ENCODE measurements at regions of chr9 and their contacts with region 1.

Region 1: GRCh38 chr9:97598461-97599288 is 34.5 kb downstream of the TSTD2 start:
- DNase-seq: peak; percentile 20
- H3K4me3 ChIP-seq: no peak overlapping the region
- H3K27me3 ChIP-seq: no peaks in the 10 kb centered on the region
- CTCF ChIP-seq: peak; percentile 92

Region 2: DNA sequence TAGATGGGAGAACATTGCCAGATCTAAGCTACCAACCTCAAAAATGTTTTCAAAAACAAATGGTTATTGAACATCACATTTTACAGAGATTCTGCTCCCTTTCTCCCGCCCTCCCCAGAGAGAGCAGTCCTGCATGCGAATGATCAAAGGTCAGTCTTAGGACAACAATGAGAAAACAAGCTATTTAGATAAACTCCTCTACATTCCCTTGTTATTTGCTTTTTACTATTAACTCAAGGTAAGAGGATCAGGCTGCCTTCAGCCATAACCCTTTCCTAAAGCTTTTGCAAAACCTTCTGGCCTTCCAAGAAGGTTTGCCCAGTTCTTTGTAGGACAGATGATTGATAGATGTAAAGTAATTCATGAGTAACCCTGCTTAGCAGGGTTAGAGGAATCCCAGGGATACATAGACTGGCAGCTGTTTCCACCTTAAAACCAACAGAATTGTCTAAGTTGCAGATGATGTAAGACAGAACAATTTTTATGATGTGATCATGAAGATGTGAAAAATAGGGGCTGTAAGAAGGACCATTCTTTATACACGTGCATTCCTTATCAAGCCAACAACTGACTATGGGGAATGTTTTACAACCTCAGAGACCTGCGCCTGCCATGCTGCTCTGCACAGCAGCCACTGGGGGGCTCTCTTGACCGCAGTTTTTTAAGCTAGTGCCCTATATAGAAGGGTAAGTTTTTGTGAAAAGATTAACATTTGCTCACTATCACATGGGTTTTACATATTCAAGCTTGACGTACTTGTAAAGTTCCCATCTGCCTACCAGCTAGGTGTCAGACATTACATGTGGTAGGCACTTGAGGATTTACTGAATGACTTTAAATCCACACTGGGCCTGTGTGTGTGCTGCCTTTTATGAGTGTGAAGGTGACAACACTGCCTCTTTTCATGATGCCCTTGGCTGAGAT is 742.0 kb before region 1 on chr9:
- CTCF ChIA-PET with region 1: interaction called, 24 read pairs
- POLR2A ChIA-PET with region 1: no interaction called
- DNase-seq: no peak
- H3K4me3 ChIP-seq: no peak overlapping the region
- H3K27me3 ChIP-seq: no peaks in the 10 kb centered on the region
- CTCF ChIP-seq: peak; percentile 91

Region 3: DNA sequence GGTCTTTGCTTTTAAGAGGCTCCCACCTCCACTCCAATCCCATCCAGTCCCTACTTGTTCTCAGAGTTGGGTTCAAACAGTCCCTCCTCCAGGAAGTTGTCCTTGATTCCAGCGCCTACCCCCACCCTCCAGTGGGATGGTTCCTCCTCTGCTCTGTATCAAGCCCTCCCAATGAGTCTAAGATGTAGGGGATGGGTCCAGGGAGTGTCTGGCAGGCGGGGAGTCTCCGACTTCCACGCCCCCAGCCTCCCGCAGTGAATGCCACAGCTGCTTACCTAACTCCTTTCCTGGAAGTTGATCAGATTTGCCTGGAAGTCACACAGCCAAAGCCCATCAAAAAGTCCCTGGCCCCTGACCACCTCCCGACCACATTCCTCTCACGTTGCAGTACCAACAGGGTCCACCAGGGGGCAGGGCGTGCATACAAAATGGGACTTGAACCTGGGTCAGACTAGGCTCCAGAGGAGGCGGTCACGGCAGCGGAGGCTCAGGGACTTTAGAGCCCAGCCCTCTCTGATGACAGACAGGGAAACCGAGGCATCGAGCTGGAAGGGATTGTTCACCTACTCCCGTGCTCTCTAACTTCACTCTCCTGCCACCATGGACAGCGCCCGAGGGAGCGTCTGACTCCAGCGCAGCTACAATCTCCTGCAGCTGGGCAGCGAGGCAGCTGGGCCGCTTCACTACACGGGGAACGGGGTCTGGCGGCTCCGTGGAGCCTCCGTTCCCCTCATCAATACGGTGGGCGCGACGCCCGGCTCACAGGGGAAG is 211.8 kb before region 1 on chr9:
- CTCF ChIA-PET with region 1: interaction called, 12 read pairs
- POLR2A ChIA-PET with region 1: no interaction called
- DNase-seq: no peak
- H3K4me3 ChIP-seq: no peak overlapping the region
- H3K27me3 ChIP-seq: peaks cover 2% of the 10 kb centered on the region
- CTCF ChIP-seq: peak; percentile 99

Region 4: GRCh38 chr9:97459099-97459725 is 139.5 kb before region 1 on chr9:
- CTCF ChIA-PET with region 1: interaction called, 14 read pairs
- POLR2A ChIA-PET with region 1: no interaction called
- DNase-seq: no peak
- H3K4me3 ChIP-seq: no peak overlapping the region
- H3K27me3 ChIP-seq: no peaks in the 10 kb centered on the region
- CTCF ChIP-seq: no peak

Region 5: DNA sequence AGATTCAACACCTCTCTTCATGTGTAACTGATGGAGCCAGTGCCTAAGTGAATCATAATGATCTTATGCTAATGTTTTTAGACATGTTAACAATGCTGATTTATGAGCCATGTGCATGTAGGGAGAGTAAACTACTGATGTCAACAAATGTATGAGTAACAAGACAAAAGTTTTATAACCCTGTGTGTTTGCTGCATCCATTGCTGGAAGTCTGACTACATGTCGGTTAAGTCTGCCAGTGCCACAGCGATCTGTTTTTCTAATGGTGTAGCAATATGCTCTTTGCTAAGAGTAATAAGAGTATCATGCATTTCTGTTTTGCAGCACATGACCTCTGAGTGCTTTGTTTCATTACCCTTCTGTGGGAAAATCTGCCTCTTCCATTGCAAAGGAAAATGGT is 123.6 kb before region 1 on chr9:
- CTCF ChIA-PET with region 1: interaction called, 292 read pairs
- POLR2A ChIA-PET with region 1: no interaction called
- DNase-seq: peak; percentile 23
- H3K4me3 ChIP-seq: no peak overlapping the region
- H3K27me3 ChIP-seq: no peaks in the 10 kb centered on the region
- CTCF ChIP-seq: no peak

Region 6: DNA sequence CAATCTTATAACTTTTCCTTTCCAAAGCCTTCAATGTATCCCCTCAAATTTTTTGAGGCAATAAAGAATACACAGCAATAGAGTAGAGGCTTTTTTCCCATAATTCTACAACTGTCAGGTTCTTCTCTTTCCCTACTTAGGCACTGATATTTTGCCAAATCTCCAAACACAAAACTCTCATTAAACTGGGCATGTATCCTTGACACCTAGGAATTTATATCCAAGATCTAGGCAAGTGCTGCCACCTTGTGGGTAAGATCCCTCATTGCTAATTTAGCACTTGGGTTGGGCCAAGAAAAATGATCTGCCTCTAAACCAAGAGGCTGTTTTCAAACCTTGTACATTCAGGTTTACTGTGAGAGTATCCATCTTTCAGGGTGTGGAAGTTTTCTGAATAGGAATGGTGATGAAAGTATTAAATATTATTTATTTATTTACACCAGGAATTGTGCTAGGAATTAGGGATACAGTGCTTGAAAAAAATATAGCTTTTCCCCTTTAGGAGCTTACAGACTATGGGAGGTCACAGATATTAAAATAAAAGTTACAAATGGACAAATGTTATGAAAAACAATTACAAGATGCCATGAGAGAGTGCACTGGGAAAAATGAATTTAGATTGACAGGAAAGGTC is 16.9 kb after region 1 on chr9:
- CTCF ChIA-PET with region 1: interaction called, 136 read pairs
- POLR2A ChIA-PET with region 1: no interaction called
- DNase-seq: no peak
- H3K4me3 ChIP-seq: no peak overlapping the region
- H3K27me3 ChIP-seq: no peaks in the 10 kb centered on the region
- CTCF ChIP-seq: peak; percentile 80

Measured in BJ (cell line).